ENCODE measurements at regions of chr16 and their contacts with region 1.

Region 1: GRCh38 chr16:26795184-26795583 is 271.5 kb upstream of the C16orf82 start:
- DNase-seq: peak; percentile 81
- H3K4me3 Mint-ChIP-seq: peak overlapping the region; percentile 15
- H3K27ac Mint-ChIP-seq: no peak overlapping the region
- H3K4me1 Mint-ChIP-seq: peaks cover 12% of the 10 kb centered on the region
- H3K27me3 Mint-ChIP-seq: peaks cover 8% of the 10 kb centered on the region

Region 2: GRCh38 chr16:26665162-26665939 is 129.8 kb before region 1 on chr16:
- intact Hi-C with region 1: loop called (anchors 2 kb)
- DNase-seq: no peak
- H3K4me3 Mint-ChIP-seq: peak overlapping the region; percentile 1
- H3K27ac Mint-ChIP-seq: peak overlapping the region; percentile 18
- H3K4me1 Mint-ChIP-seq: peaks cover 31% of the 10 kb centered on the region
- H3K27me3 Mint-ChIP-seq: peaks cover 10% of the 10 kb centered on the region